Ascending aorta (tissue), 2 donors: ENCODE measurements at regions of chr11 and their contacts with region 1.

Region 1: GRCh38 chr11:535519-536454 is at the start of gene HRAS:
- DNase-seq: peak; percentile 72 to 96
- H3K4me3 ChIP-seq: peak within 1 kb of the TSS; percentile 92 to 94
- H3K27ac ChIP-seq: peak within 1 kb of the TSS; percentile 63 to 64
- H3K4me1 ChIP-seq: peaks cover 13 to 26% of the 10 kb centered on the region in 2 donors
- H3K27me3 ChIP-seq: no peaks in the 10 kb centered on the region
- CTCF ChIP-seq: no peak
- total RNA-seq, gene HRAS: 21.6 TPM

Region 2: DNA sequence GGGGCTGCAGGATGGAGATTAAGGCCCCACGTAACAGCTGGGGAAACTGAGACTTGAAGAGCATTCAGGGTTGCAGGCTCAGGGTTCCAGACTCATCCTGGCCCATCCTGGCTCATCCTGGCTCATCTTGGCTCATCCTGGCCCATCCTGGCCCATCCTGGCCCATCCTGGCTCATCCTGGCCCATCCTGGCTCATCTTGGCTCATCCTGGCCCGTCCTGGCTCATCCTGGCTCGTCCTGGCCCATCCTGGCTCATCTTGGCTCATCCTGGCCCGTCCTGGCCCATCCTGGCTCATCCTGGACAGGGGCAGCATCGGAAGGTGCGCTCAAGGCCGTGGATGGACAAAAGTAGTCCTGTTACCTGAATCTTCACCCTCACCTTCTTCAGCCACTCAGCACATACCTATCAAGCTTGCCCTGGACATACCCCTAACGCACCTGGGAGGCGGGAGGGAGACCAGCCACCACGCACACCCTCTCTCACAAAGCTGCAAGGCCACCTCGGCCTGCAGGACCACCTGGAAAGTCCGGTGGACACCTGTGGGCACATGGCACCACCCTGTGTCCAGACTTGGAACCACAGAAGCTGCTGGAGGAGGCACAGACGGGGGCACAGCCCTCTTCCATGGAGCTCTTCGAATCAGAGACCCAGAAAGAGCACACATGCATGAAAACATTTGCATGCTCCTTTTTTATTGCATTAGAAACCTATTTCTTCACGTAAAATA is 277.9 kb before region 1 on chr11:
- intact Hi-C with region 1: no loop called
- DNase-seq: peak in 1 of 2 donors; percentile 43
- H3K4me3 ChIP-seq: no peak overlapping the region
- H3K27ac ChIP-seq: no peak overlapping the region
- H3K4me1 ChIP-seq: no peaks in the 10 kb centered on the region
- H3K27me3 ChIP-seq: no peaks in the 10 kb centered on the region
- CTCF ChIP-seq: no peak

Region 3: GRCh38 chr11:382081-382629 is 153.6 kb before region 1 on chr11:
- intact Hi-C with region 1: no loop called
- DNase-seq: no peak
- H3K4me3 ChIP-seq: no peak overlapping the region
- H3K27ac ChIP-seq: no peak overlapping the region
- H3K4me1 ChIP-seq: no peaks in the 10 kb centered on the region
- H3K27me3 ChIP-seq: no peaks in the 10 kb centered on the region
- CTCF ChIP-seq: no peak

Region 4: GRCh38 chr11:518463-519250 is 17.1 kb before region 1 on chr11:
- intact Hi-C with region 1: no loop called
- DNase-seq: peak; percentile 81 to 96
- H3K4me3 ChIP-seq: peak overlapping the region; percentile 11 to 54
- H3K27ac ChIP-seq: peak overlapping the region; percentile 76 to 80
- H3K4me1 ChIP-seq: peaks cover 2 to 3% of the 10 kb centered on the region in 2 donors
- H3K27me3 ChIP-seq: no peaks in the 10 kb centered on the region
- CTCF ChIP-seq: peak; percentile 84 to 100 (median 96)

Region 5: DNA sequence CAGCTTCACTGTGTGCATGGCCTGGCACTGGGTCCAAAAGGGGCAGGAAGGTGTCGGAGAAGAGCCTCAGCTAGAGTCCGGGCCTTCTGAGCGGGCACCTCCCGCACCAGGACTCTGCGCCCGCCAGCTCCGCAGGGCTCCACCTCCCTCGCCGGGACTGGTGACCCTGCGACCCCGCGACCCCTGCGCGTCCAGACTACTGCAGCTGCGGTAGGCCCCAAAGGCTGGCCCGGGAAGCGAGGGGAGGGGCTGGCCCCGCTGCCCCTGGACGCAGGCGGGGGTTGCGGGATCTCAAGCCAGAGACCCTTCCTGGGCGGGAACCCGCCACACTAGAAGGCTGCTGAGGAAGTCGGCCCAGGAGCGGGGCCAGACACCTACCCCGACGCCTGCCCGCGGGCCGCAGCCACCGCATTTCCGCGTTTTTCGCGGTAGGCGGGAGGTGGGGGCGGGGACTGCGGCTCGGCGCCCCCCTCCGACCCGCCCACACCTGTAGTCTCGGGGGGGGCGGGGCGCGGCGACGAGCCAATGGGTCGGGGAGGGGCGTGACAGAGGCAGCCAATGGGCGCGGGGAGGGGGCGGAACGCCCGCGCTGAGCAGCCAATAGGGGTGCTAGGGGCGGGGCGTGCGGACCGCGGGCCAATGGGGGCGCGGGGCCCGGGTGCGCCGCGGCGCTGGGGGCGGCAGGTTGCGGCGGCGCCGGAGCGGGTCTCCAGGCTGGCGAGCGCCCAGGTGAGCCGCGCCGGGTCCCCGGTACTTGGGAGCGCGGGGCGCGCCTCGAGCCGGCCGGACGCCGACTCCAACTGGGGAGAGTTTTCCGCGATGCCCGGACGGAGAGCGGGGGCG is 24.7 kb after region 1 on chr11 and contains the starts of genes LMNTD2 and RASSF7:
- intact Hi-C with region 1: loop called (anchors 1 kb)
- DNase-seq: peak; percentile 68 to 94
- H3K4me3 ChIP-seq: peak within 1 kb of the TSS; percentile 63 to 86
- H3K27ac ChIP-seq: no peak within 1 kb of the TSS
- H3K4me1 ChIP-seq: peaks cover 11 to 12% of the 10 kb centered on the region in 2 donors
- H3K27me3 ChIP-seq: peaks cover 10% of the 10 kb centered on the region
- CTCF ChIP-seq: no peak
- total RNA-seq, gene LMNTD2: 1.1 TPM
- total RNA-seq, gene RASSF7: 3.5 TPM

Region 6: DNA sequence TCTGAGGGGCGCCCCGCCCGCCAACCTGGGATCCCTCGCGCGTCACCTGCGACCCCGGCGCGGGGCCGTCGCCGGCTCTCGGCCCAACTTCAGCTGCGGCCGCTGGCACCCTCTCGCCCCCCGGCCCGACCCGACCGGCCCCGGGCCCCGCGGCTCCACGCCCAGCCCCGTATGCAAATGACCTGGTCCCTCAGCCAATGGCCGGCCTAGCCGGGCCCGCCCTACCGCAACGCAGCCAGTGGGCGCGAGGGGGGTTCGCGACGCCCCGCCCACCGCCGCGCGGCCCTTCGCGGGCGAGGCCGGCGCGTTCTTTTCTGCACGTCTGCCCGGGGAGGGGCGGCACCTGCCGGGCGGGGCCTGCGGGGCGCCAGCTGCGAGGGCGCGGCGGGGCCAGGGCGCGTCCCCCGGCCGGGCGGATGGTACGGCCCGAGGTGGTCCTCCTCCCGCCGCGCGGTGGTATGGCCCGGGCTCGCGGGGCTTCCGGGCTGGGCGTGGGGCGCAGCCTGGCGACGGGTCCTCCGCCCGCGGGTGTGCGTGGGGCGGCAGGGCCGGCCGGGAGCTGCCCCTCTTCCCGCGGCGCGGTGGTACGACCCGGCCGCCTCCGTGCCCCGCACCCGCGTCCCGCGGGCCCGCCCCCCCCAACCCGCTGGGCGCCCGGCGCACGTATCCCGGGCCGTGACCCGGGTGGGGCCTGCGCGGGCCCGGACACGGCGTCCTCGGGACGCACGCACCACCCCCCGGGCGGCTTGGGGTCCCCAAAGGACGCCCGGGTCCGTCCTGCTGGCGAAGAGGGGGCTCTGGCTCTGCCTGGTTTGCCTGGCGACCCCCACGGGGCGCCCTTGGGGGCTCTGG is 32.7 kb after region 1 on chr11:
- intact Hi-C with region 1: loop called (anchors 2 kb)
- DNase-seq: peak; percentile 83 to 97
- H3K4me3 ChIP-seq: peak overlapping the region; percentile 72 to 76
- H3K27ac ChIP-seq: peak overlapping the region; percentile 77 to 89
- H3K4me1 ChIP-seq: peaks cover 4 to 9% of the 10 kb centered on the region in 2 donors
- H3K27me3 ChIP-seq: no peaks in the 10 kb centered on the region
- CTCF ChIP-seq: no peak